Naive thymus-derived CD8-positive, alpha-beta T cell (primary cell): ENCODE measurements at regions of chr11 and their contacts with region 1.

Region 1: GRCh38 chr11:121451986-121452608 is at the start of gene SORL1:
- DNase-seq: peak; percentile 60 to 84 (median 74)
- ATAC-seq: peak; percentile 59 to 65
- H3K4me3 Mint-ChIP-seq: peak within 1 kb of the TSS; percentile 93 to 100 (median 97)
- H3K27ac Mint-ChIP-seq: peak within 1 kb of the TSS; percentile 94 to 99 (median 97)
- H3K4me1 Mint-ChIP-seq: peaks cover 54 to 90% (median 86%) of the 10 kb centered on the region in 4 donors
- H3K27me3 Mint-ChIP-seq: no peaks in the 10 kb centered on the region
- polyA plus RNA-seq, gene SORL1: 157 to 230 (median 158) TPM

Region 2: GRCh38 chr11:121328967-121329679 is 123.0 kb before region 1 on chr11:
- POLR2A ChIA-PET with region 1: interaction called, 45 read pairs
- DNase-seq: peak in 3 of 10 donors; percentile 10 to 24 (median 24)
- ATAC-seq: peak; percentile 49 to 50
- H3K4me3 Mint-ChIP-seq: no peak overlapping the region
- H3K27ac Mint-ChIP-seq: no peak overlapping the region
- H3K4me1 Mint-ChIP-seq: peaks cover 8 to 11% (median 9%) of the 10 kb centered on the region in 4 donors
- H3K27me3 Mint-ChIP-seq: no peaks in the 10 kb centered on the region

Region 3: GRCh38 chr11:121417055-121417551 is 35.0 kb before region 1 on chr11:
- POLR2A ChIA-PET with region 1: interaction called, 124 read pairs
- DNase-seq: peak; percentile 25 to 71 (median 52)
- ATAC-seq: peak; percentile 45 to 71
- H3K4me3 Mint-ChIP-seq: peak overlapping the region in 9 of 10 donors; percentile 52 to 77 (median 64)
- H3K27ac Mint-ChIP-seq: peak overlapping the region; percentile 85 to 96 (median 91)
- H3K4me1 Mint-ChIP-seq: peaks cover 36 to 77% (median 66%) of the 10 kb centered on the region in 4 donors
- H3K27me3 Mint-ChIP-seq: no peaks in the 10 kb centered on the region

Region 4: DNA sequence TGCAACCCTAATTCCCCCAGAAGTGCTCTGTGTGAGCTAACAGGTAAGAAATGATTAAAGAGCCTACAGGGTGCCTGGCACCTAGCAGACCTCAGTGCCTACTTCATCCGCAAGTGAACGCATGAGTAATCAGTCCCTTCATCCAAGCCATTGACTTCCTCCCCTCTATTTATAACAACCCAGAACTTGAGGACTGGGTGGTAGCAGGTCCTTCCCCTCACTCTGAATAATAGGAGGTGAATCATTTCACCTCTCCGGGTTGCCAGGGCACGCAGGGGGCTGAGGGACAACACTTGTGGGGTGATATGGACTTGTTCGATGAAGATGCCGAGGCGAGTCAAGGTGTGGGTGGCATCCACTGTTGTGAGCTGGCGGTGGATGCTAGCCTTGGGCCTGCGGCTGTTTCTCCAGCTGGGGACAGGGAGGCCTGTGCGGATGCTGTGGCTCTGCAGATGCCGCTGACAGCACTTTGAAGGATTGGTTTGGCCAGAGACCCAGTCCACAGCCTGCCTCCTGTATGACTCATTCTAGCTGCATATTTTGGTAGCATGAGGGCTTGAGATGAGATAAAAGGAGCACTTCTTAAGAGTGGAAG is 12.4 kb after region 1 on chr11:
- POLR2A ChIA-PET with region 1: interaction called, 385 read pairs
- DNase-seq: peak; percentile 38 to 85 (median 60)
- ATAC-seq: peak; percentile 65 to 66
- H3K4me3 Mint-ChIP-seq: peak overlapping the region; percentile 65 to 97 (median 74)
- H3K27ac Mint-ChIP-seq: peak overlapping the region; percentile 78 to 99 (median 95)
- H3K4me1 Mint-ChIP-seq: peaks cover 60 to 100% (median 100%) of the 10 kb centered on the region in 4 donors
- H3K27me3 Mint-ChIP-seq: no peaks in the 10 kb centered on the region

Region 5: DNA sequence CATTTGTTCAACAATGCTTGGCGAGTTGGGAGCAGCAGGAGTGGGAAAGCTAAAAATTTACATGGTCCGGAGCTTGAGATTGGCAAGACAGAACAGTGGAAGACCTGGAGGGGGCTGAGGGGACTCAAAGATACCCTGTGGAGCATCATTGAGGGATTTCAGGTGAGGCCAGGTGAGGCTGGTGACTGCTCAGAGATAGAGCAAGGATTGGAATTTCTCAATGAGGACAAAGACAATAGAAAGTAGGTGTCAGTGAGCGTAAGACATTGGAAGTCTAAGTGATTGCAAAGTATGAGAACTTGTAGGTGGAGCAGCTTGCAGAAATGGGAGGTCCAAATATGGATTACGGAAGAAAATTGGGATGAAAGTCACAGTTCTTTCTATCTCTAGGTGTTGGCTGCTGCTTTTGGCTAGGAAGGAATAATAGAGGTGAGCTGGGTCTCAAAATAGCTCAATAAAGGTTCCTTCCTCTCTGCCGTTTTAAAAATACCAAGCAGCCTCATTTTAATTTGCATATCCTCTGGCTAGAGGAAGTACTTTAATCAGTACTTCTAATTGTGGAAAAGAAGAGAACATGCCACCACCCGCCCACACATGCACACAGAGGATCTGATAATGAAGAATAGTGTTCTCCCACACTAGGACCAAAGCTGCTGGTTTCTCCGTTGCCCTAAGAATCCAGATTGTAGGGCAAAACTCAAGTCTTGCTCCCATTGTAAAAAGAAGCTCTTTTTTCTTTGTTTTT is 42.4 kb after region 1 on chr11:
- POLR2A ChIA-PET with region 1: interaction called, 23 read pairs
- DNase-seq: peak in 5 of 10 donors; percentile 4 to 36 (median 14)
- ATAC-seq: peak; percentile 77 to 82
- H3K4me3 Mint-ChIP-seq: peak overlapping the region; percentile 29 to 82 (median 66)
- H3K27ac Mint-ChIP-seq: peak overlapping the region; percentile 71 to 89 (median 85)
- H3K4me1 Mint-ChIP-seq: peaks cover 46 to 80% (median 69%) of the 10 kb centered on the region in 4 donors
- H3K27me3 Mint-ChIP-seq: no peaks in the 10 kb centered on the region

Region 6: DNA sequence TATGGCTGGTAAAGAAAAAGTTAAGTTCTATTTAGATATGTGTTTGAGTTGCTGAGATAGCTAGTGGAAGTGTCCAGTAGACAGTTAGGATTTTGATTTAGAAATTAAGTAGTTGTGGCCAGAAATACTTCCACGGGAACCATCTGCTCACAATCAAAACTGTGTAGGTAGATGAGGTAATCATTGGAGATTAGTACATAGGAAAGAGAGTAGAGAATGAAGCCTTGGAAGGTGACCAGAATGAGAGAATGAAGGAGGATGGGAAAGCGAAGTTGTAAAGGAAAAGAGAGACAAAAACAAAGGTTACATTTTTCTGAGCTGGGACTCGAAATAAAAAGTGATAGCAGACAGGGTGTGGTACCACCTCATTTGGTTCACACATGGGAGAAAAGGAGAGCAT is 297.6 kb after region 1 on chr11:
- POLR2A ChIA-PET with region 1: no interaction called
- DNase-seq: no peak
- ATAC-seq: no peak
- H3K4me3 Mint-ChIP-seq: no peak overlapping the region
- H3K27ac Mint-ChIP-seq: no peak overlapping the region
- H3K4me1 Mint-ChIP-seq: no peaks in the 10 kb centered on the region
- H3K27me3 Mint-ChIP-seq: peaks cover 3 to 20% (median 10%) of the 10 kb centered on the region in 5 donors